WTC11 (cell line): ENCODE measurements at regions of chr9 and their contacts with region 1.

Region 1: DNA sequence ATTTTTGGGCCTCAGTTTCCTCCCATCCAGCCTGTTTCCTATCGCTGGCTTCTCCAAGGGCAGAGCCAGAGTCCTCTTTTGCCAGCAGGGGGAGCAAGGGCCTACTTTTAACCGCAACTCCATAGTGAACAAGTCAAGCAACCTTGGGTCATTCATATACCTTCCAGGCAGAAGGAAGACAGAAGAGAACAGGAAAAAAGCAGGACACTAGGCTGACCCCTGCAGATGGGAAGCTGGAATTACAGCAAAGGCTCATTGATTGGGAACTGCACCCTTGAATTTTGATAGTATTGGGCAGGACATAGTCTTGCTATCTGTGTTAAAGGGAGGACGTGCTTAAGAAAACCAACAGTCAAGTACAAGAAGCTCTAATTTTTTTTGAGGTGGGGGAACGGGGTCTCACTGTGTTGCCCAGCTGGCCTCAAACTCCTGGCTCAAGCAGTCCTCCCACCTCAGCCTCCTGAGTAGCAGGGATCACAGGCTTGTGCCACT is 30.1 kb downstream of the QRFP start:
- DNase-seq: peak; percentile 91
- ATAC-seq: peak; percentile 95
- H3K4me3 Mint-ChIP-seq: no peak overlapping the region
- H3K27ac Mint-ChIP-seq: peak overlapping the region; percentile 77; the same call in 1 of the 2 replicates
- H3K4me1 Mint-ChIP-seq: peaks cover 5% of the 10 kb centered on the region
- H3K27me3 Mint-ChIP-seq: no peaks in the 10 kb centered on the region
- CTCF ChIP-seq: peak; percentile 85

Region 2: DNA sequence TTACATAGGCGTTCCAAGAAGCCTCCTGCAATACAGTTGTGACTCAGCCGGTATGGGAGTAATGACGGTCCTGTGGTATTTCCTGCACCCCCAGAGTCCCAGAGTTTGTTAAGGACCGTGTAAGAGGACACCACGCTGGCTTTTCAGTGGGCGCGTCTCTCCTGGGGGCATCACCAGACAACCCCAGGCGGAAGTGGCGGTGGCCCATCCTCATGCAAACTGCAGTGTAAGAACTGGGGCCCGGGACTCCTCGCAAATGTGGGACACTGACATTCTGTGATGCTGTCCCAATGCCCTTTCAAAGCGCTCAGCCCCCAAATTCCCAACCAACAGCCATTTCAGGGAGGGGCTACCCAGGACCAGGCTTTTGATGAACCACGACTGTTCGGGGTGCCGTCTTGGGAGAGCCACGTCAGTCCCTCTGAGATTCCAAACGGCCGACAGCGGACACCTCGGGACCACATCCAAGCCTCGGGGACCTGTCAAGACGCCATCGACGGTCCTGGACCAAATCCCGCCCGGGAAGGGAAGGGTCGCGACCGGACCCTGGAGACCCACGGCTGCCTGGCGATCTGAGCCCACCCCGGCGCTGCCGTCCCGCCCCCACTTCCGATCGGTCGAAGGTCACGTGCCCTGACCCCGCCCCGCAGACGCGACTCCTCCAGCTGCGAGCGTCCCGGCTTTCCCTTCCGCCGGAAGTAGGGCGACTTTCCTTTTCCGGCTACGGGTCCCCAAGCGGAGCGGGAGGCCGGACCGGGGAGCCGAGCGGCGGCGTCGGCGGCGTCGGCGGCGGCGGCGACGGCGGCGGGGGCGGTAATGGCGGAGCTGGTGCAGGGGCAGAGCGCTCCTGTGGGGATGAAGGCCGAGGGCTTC is 287.4 kb before region 1 on chr9 and contains the start of gene FUBP3:
- CTCF ChIA-PET with region 1: no interaction called
- POLR2A ChIA-PET with region 1: no interaction called
- DNase-seq: peak; percentile 92
- ATAC-seq: peak; percentile 86
- H3K4me3 Mint-ChIP-seq: peak within 1 kb of the TSS; percentile 84
- H3K27ac Mint-ChIP-seq: peak within 1 kb of the TSS; percentile 86
- H3K4me1 Mint-ChIP-seq: peaks cover 16% of the 10 kb centered on the region
- H3K27me3 Mint-ChIP-seq: peaks cover 3% of the 10 kb centered on the region; the same call in 1 of the 2 replicates
- CTCF ChIP-seq: no peak
- total RNA-seq, gene FUBP3: 68.4 to 83.0 TPM (median 69.6 TPM) in 3 replicates

Region 3: DNA sequence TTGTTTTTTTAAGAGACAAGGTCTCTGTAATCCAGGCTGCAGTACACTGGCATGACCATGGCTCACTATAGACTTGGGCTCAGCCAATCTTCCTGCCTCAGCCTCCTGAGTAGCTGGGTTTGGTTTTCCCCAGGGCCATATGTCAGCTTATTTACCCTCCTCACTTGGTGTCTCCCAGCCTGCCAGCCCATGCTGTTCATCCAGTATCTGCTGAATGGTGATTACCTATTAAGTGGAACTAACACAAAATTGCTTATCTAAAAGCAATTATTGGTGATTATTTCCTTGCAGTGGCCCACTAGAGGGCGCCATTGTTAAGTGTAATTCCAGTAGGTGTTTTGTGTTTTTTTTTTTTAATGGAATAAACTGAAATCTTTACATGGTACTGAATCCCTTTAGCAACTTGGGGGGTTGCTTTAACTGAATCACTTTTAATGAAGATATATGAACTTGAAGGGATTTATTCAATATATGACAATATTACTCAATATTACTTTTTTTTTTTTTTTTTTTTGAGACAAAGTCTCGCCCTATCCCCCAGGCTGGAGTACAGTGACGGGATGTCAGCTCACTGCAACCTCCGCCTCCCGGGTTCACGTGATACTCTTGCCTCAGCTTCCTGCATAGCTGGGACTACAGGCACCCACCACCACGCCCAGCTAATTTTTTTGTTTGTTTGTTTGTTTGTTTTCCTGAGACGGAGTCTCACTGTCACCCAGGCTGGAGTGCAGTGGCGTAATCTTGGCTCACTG is 159.1 kb before region 1 on chr9:
- CTCF ChIA-PET with region 1: interaction called, 83 read pairs
- POLR2A ChIA-PET with region 1: no interaction called
- DNase-seq: peak; percentile 70
- ATAC-seq: peak; percentile 50
- H3K4me3 Mint-ChIP-seq: no peak overlapping the region
- H3K27ac Mint-ChIP-seq: peak overlapping the region; percentile 91
- H3K4me1 Mint-ChIP-seq: peaks cover 3% of the 10 kb centered on the region; the same call in 1 of the 2 replicates
- H3K27me3 Mint-ChIP-seq: no peaks in the 10 kb centered on the region
- CTCF ChIP-seq: peak; percentile 80

Region 4: GRCh38 chr9:130756037-130756436 is 110.5 kb before region 1 on chr9:
- CTCF ChIA-PET with region 1: interaction called, 22 read pairs
- POLR2A ChIA-PET with region 1: interaction called, 4 read pairs
- DNase-seq: no peak
- ATAC-seq: no peak
- H3K4me3 Mint-ChIP-seq: no peak overlapping the region
- H3K27ac Mint-ChIP-seq: no peak overlapping the region
- H3K4me1 Mint-ChIP-seq: peaks cover 29% of the 10 kb centered on the region
- H3K27me3 Mint-ChIP-seq: no peaks in the 10 kb centered on the region
- CTCF ChIP-seq: no peak

Region 5: GRCh38 chr9:130842545-130842944 is 24.0 kb before region 1 on chr9:
- CTCF ChIA-PET with region 1: interaction called, 14 read pairs
- POLR2A ChIA-PET with region 1: no interaction called
- DNase-seq: no peak
- ATAC-seq: peak; percentile 22
- H3K4me3 Mint-ChIP-seq: no peak overlapping the region
- H3K27ac Mint-ChIP-seq: peak overlapping the region; percentile 69
- H3K4me1 Mint-ChIP-seq: peaks cover 88% of the 10 kb centered on the region
- H3K27me3 Mint-ChIP-seq: no peaks in the 10 kb centered on the region
- CTCF ChIP-seq: no peak

Region 6: GRCh38 chr9:130893341-130894101 is 27.0 kb after region 1 on chr9:
- CTCF ChIA-PET with region 1: interaction called, 20 read pairs
- POLR2A ChIA-PET with region 1: interaction called, 3 read pairs
- DNase-seq: peak; percentile 51
- ATAC-seq: peak; percentile 63
- H3K4me3 Mint-ChIP-seq: no peak overlapping the region
- H3K27ac Mint-ChIP-seq: peak overlapping the region; percentile 60; the same call in 1 of the 2 replicates
- H3K4me1 Mint-ChIP-seq: no peaks in the 10 kb centered on the region
- H3K27me3 Mint-ChIP-seq: no peaks in the 10 kb centered on the region
- CTCF ChIP-seq: no peak

Region 7: DNA sequence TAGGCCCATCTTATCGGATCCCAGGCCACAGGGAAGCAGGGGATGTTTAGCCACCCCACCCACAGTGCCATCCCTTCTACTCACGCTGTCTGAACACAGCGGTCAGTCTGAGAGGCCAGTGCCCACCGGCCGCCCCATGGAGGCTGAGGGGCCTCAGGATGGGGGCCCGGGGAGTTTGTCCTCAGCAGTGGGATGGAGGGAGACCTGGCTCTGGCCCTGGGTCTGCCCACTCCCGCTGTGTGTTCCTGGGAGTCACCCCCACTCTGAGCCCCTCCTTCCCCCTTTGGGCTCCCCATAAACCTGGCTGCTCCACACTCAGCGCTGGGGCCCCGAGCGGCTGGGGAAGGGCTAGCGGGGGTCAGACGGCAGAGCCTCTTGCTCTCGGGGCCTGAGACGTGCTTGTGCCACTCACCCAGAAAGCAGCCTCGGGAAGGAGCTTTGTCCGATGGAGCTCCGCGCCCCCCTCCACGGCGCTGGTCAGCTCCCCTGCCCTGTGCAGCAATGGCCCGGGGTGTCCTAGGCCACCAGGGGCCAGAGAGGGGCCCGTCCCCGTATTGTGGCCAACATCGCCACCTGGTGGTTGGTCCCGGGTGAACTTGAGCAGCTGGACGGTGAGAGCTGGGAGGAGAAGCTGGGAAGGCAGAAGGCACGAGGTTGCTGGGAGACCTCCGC is 131.5 kb after region 1 on chr9:
- CTCF ChIA-PET with region 1: interaction called, 80 read pairs
- POLR2A ChIA-PET with region 1: no interaction called
- DNase-seq: peak; percentile 96
- ATAC-seq: peak; percentile 90
- H3K4me3 Mint-ChIP-seq: no peak overlapping the region
- H3K27ac Mint-ChIP-seq: no peak overlapping the region
- H3K4me1 Mint-ChIP-seq: peaks cover 3% of the 10 kb centered on the region; the same call in 1 of the 2 replicates
- H3K27me3 Mint-ChIP-seq: peaks cover 14% of the 10 kb centered on the region
- CTCF ChIP-seq: peak; percentile 83